Activated CD4-positive, alpha-beta memory T cell treated with anti-CD3 and anti-CD28 coated beads for 36 hours (primary cell): ENCODE measurements at regions of chr5 and their contacts with region 1.

Region 1: DNA sequence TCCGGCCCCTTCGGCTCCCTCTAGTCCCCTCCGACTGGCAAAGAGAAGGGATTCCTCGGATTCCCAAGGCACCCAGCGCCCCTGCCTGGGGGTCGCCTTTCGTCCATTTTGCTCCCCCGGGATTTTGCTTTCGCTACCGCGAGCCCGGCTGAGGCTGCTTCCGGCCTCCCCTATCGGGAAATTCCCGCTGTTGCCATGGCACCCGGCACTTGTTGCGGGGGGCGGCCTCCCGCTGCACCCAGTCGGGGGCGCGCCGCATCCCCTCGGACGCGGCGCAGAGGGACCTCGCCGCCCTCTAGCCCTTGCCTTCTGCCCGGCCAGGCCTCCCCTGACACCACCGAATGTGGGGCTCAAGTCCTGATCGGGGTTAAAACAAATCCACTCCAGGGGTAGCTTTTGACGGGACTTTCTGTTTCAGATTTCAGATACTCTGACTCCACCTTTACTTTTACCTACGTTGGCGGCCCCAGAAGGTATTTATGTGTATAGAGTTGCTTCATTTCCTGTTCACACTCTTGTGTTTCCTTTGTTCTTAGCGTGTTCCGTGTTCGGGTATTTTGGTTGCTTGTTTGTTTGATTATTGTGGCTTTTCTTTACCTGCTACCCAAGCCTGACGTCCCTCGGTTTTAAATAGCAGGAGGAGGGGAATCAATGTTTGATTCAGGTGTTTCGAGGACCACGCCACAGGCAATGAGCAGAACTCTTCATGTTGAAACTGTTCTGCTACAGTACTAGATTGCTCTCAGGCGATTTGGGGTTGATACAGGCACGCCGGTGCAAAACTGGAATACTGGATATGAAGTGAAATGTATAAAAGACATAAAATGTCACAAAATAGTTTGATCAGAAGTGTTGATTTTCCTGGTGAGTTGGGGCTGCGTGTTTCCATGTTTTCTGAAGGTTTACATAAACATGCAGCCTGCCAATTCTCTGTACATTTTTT is 1.5 kb downstream of the PARP8 start:
- DNase-seq: peak; percentile 90
- H3K4me3 Mint-ChIP-seq: peak overlapping the region; percentile 90
- H3K27ac Mint-ChIP-seq: peak overlapping the region; percentile 98
- H3K4me1 Mint-ChIP-seq: peaks cover 44% of the 10 kb centered on the region
- H3K27me3 Mint-ChIP-seq: no peaks in the 10 kb centered on the region

Region 2: GRCh38 chr5:50711273-50711672 is 43.3 kb after region 1 on chr5:
- CTCF ChIA-PET with region 1: no interaction called
- POLR2A ChIA-PET with region 1: interaction called, 4 read pairs
- intact Hi-C with region 1: loop called (anchors 2 kb)
- DNase-seq: peak; percentile 74
- H3K4me3 Mint-ChIP-seq: peak overlapping the region; percentile 54
- H3K27ac Mint-ChIP-seq: peak overlapping the region; percentile 60
- H3K4me1 Mint-ChIP-seq: peaks cover 81% of the 10 kb centered on the region
- H3K27me3 Mint-ChIP-seq: no peaks in the 10 kb centered on the region